MCF 10A (cell line): ENCODE measurements at regions of chr7 and their contacts with region 1.

Region 1: DNA sequence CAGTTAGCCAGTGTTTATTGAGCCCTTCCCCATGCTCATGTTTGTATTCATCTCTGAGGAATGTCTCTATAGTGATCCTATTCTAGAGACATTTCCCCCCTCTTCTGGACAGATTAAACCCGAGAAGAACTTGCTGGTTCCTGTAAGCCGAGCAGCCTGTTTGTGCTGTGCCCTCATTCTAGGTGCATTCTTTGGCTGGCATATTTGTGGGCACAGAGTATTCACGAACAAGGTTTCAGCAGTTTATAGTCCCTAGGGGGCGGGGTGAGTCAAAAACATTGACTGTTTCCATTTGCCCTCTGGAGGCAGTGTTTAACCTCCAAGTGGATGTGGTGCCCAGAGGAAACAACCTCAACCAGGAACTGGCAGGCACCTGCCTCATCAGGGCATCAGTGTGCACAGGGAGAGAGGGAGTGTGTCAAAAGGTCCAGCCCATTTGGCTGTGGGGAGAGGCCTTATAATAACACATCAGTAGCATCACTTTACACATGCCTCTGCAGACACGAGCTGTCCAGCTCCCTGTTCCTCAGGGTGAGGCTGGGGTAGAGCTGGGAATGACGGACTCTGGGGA is 273.3 kb upstream of the LRGUK start:
- DNase-seq: peak; percentile 94
- H3K4me3 Mint-ChIP-seq: peak overlapping the region; percentile 64
- H3K27ac Mint-ChIP-seq: peak overlapping the region; percentile 94
- H3K4me1 Mint-ChIP-seq: peaks cover 33% of the 10 kb centered on the region
- H3K27me3 Mint-ChIP-seq: no peaks in the 10 kb centered on the region
- CTCF ChIP-seq: peak; percentile 55

Region 2: GRCh38 chr7:133364959-133365690 is 488.7 kb before region 1 on chr7:
- CTCF ChIA-PET with region 1: no interaction called
- POLR2A ChIA-PET with region 1: no interaction called
- intact Hi-C with region 1: loop called (anchors 10 kb)
- DNase-seq: peak; percentile 42
- H3K4me3 Mint-ChIP-seq: no peak overlapping the region
- H3K27ac Mint-ChIP-seq: no peak overlapping the region
- H3K4me1 Mint-ChIP-seq: peaks cover 5% of the 10 kb centered on the region
- H3K27me3 Mint-ChIP-seq: no peaks in the 10 kb centered on the region
- CTCF ChIP-seq: no peak

Region 3: DNA sequence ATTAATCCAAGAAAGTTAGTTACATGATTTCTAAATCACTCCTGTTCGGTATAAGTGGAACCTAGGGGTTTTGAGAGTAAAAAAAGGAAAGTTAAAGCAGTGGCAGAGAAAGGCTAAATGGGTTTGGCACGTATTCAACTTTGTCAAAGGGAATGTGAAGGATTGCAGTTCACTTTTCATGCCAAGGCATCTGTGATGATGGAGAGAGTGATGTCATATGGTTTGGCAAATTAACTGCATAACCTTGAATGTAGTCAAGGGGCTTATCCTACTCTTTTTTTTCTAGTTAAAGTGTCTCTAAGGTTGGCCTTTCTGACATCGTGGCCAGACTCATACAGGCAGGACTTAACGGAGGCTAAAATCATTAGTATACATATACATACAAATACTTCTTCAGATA is 323.1 kb before region 1 on chr7:
- CTCF ChIA-PET with region 1: no interaction called
- POLR2A ChIA-PET with region 1: no interaction called
- intact Hi-C with region 1: loop called (anchors 5 kb)
- DNase-seq: peak; percentile 36
- H3K4me3 Mint-ChIP-seq: no peak overlapping the region
- H3K27ac Mint-ChIP-seq: no peak overlapping the region
- H3K4me1 Mint-ChIP-seq: peaks cover 7% of the 10 kb centered on the region
- H3K27me3 Mint-ChIP-seq: no peaks in the 10 kb centered on the region
- CTCF ChIP-seq: no peak

Region 4: DNA sequence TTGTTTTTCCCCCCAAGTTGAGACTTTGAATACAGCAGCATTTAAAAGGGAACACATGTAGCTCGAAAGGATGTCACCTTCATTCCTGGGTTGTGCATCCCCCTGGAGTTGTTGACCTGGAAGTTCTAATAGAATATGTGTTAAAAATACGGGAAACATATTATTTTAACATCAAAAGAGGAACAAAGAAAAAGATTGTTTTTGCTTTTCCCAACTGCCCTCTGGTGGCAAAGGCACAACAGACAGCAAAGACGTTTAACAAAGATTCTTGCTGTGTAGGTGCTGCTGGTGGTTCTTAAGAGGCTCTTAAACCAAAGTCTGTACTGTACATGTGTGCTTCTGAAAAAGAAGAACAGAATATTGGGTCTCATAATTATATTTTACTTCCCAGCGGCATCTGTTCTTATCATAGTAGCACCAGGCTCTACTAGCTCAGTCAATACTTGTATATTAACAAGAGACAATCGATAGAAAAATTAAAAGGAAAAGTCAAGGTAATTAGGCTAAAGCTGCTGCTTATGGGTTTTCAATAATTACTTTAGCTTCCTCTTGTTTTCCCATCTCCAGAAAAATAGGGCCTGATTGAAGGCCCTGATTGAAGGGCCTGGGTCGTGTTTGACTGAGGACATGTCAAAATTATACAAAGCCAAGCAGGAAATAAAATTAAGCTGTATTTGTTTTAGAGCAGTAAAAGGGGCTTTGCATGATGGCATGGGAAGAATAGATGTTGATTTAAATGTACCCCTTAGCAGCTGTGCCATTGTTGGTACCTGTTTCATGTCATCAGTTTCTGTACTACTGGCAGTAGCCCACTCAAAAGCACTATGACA is 110.9 kb before region 1 on chr7:
- CTCF ChIA-PET with region 1: interaction called, 3 read pairs
- POLR2A ChIA-PET with region 1: interaction called, 4 read pairs
- intact Hi-C with region 1: loop called (anchors 10 kb)
- DNase-seq: peak; percentile 39
- H3K4me3 Mint-ChIP-seq: no peak overlapping the region
- H3K27ac Mint-ChIP-seq: no peak overlapping the region
- H3K4me1 Mint-ChIP-seq: no peaks in the 10 kb centered on the region
- H3K27me3 Mint-ChIP-seq: no peaks in the 10 kb centered on the region
- CTCF ChIP-seq: peak; percentile 49